ENCODE measurements at regions of chr12 and their contacts with region 1.

Region 1: GRCh38 chr12:65791400-65791799 is 32.9 kb upstream of the HMGA2 start:
- DNase-seq: no peak
- ATAC-seq: no peak
- H3K4me3 ChIP-seq: no peak overlapping the region
- H3K27ac ChIP-seq: no peak overlapping the region
- H3K4me1 ChIP-seq: no peaks in the 10 kb centered on the region
- H3K27me3 ChIP-seq: no peaks in the 10 kb centered on the region
- CTCF ChIP-seq: no peak
- POLR2A ChIP-seq: no peak
- RAD21 ChIP-seq: no peak

Region 2: GRCh38 chr12:65565601-65566560 is 225.5 kb before region 1 on chr12:
- CTCF ChIA-PET with region 1: no interaction called
- POLR2A ChIA-PET with region 1: no interaction called
- dilution Hi-C with region 1: no loop called
- in situ Hi-C with region 1: no loop called
- intact Hi-C with region 1: no loop called
- DNase-seq: peak; percentile 99
- ATAC-seq: peak; percentile 78
- H3K4me3 ChIP-seq: peak overlapping the region; percentile 13; the same call in 1 of the 2 replicates
- H3K27ac ChIP-seq: peak overlapping the region; percentile 98
- H3K4me1 ChIP-seq: peaks cover 25% of the 10 kb centered on the region
- H3K27me3 ChIP-seq: no peaks in the 10 kb centered on the region
- CTCF ChIP-seq: 0 out of 2 replicates have a peak, but pooled peaks have one; percentile 0
- POLR2A ChIP-seq: peak; percentile 72; the same call in 1 of the 2 replicates
- RAD21 ChIP-seq: peak; percentile 13

Region 3: GRCh38 chr12:65703176-65703575 is 88.2 kb before region 1 on chr12:
- CTCF ChIA-PET with region 1: no interaction called
- POLR2A ChIA-PET with region 1: no interaction called
- dilution Hi-C with region 1: no loop called
- in situ Hi-C with region 1: no loop called
- intact Hi-C with region 1: loop called (anchors 5 kb)
- DNase-seq: no peak
- ATAC-seq: no peak
- H3K4me3 ChIP-seq: no peak overlapping the region
- H3K27ac ChIP-seq: no peak overlapping the region
- H3K4me1 ChIP-seq: no peaks in the 10 kb centered on the region
- H3K27me3 ChIP-seq: no peaks in the 10 kb centered on the region
- CTCF ChIP-seq: no peak
- POLR2A ChIP-seq: no peak
- RAD21 ChIP-seq: no peak

Region 4: GRCh38 chr12:66169221-66170170 is 378.1 kb after region 1 on chr12 and contains the start of gene TMBIM4:
- CTCF ChIA-PET with region 1: no interaction called
- POLR2A ChIA-PET with region 1: no interaction called
- dilution Hi-C with region 1: no loop called
- in situ Hi-C with region 1: no loop called
- intact Hi-C with region 1: no loop called
- DNase-seq: peak; percentile 95
- ATAC-seq: peak; percentile 92
- H3K4me3 ChIP-seq: peak within 1 kb of the TSS; percentile 83
- H3K27ac ChIP-seq: peak within 1 kb of the TSS; percentile 99
- H3K4me1 ChIP-seq: peaks cover 2% of the 10 kb centered on the region; the same call in 1 of the 2 replicates
- H3K27me3 ChIP-seq: no peaks in the 10 kb centered on the region
- CTCF ChIP-seq: peak; percentile 34
- POLR2A ChIP-seq: peak; percentile 80
- RAD21 ChIP-seq: peak; percentile 19; the same call in 1 of the 2 replicates
- total RNA-seq, gene TMBIM4: 59.3 and 89.7 TPM in 2 replicates

Measured in IMR-90 (cell line).